Gastrocnemius medialis (tissue), 4 donors: ENCODE measurements at regions of chr13 and their contacts with region 1.

Region 1: GRCh38 chr13:33931397-33932311 is 113.7 kb downstream of the RFC3 start:
- DNase-seq: no peak
- ATAC-seq: no peak
- H3K4me3 ChIP-seq: no peak overlapping the region
- H3K27ac ChIP-seq: no peak overlapping the region
- H3K4me1 ChIP-seq: peaks cover 0 to 5% of the 10 kb centered on the region in 2 donors
- H3K27me3 ChIP-seq: no peaks in the 10 kb centered on the region
- CTCF ChIP-seq: peak in 3 of 5 experiments; percentile 20 to 30 (median 27)
- POLR2A ChIP-seq: no peak

Region 2: DNA sequence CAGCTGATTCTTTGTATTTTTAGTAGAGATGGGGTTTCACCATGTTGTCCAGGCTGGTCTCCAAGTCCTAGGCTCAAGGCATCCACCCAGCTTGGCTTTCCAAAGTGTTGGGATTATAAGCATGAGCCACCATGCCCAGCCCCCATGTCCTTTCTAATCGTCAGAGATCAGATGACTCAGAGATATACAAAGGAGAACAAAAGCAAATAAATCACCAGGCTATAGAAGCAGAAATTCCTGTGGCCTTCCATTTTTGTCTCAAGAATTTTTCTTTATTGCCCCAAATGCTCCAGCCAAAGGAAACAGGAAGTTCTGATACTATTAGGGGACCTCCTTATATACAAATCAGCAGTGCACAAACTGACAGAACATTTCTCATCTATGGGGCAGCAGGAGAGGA is 94.1 kb after region 1 on chr13:
- in situ Hi-C with region 1: no loop called
- intact Hi-C with region 1: no loop called
- DNase-seq: no peak
- ATAC-seq: no peak
- H3K4me3 ChIP-seq: no peak overlapping the region
- H3K27ac ChIP-seq: no peak overlapping the region
- H3K4me1 ChIP-seq: no peaks in the 10 kb centered on the region
- H3K27me3 ChIP-seq: no peaks in the 10 kb centered on the region
- CTCF ChIP-seq: no peak
- POLR2A ChIP-seq: no peak

Region 3: DNA sequence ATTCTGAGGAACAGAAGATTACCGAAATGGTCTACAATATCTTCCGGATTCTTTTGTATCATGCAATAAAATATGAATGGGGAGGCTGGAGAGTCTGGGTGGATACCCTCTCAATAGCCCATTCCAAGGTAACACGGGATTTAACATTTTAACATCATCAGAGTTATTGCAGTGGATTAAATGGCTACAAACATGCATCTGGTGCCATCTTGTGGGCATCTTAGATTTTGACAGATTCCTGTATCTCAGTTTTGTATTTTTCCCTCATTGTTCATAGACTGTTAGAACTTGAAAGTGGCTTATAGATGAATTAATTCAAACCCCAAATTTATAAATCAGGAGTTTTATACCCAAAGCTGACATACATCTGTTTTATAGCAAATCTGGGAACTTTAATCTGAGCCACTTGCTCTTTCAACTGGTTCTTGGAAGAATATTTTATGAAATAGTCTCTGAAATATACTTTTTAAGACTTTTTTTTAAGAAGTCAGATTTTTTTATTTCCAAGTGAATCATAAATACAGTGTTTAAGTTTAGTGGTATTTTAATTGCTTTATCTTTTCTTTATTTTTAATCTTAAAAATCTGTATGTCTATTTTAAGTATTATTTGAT is 1225.6 kb after region 1 on chr13:
- in situ Hi-C with region 1: loop called in 3 of 4 experiments (anchors 10 to 25 kb)
- intact Hi-C with region 1: no loop called
- DNase-seq: no peak
- ATAC-seq: peak in 1 of 2 donors; percentile 55
- H3K4me3 ChIP-seq: no peak overlapping the region
- H3K27ac ChIP-seq: no peak overlapping the region
- H3K4me1 ChIP-seq: no peaks in the 10 kb centered on the region
- H3K27me3 ChIP-seq: no peaks in the 10 kb centered on the region
- CTCF ChIP-seq: peak; percentile 19 to 69 (median 52)
- POLR2A ChIP-seq: no peak

Region 4: GRCh38 chr13:35164324-35164932 is 1232.8 kb after region 1 on chr13:
- in situ Hi-C with region 1: loop called in 3 of 4 experiments (anchors 10 to 25 kb)
- intact Hi-C with region 1: no loop called
- DNase-seq: no peak
- ATAC-seq: peak in 1 of 2 donors; percentile 56
- H3K4me3 ChIP-seq: no peak overlapping the region
- H3K27ac ChIP-seq: no peak overlapping the region
- H3K4me1 ChIP-seq: no peaks in the 10 kb centered on the region
- H3K27me3 ChIP-seq: no peaks in the 10 kb centered on the region
- CTCF ChIP-seq: peak; percentile 31 to 64 (median 48)
- POLR2A ChIP-seq: no peak